CD8-positive, alpha-beta memory T cell (primary cell): ENCODE measurements at regions of chr7 and their contacts with region 1.

Region 1: DNA sequence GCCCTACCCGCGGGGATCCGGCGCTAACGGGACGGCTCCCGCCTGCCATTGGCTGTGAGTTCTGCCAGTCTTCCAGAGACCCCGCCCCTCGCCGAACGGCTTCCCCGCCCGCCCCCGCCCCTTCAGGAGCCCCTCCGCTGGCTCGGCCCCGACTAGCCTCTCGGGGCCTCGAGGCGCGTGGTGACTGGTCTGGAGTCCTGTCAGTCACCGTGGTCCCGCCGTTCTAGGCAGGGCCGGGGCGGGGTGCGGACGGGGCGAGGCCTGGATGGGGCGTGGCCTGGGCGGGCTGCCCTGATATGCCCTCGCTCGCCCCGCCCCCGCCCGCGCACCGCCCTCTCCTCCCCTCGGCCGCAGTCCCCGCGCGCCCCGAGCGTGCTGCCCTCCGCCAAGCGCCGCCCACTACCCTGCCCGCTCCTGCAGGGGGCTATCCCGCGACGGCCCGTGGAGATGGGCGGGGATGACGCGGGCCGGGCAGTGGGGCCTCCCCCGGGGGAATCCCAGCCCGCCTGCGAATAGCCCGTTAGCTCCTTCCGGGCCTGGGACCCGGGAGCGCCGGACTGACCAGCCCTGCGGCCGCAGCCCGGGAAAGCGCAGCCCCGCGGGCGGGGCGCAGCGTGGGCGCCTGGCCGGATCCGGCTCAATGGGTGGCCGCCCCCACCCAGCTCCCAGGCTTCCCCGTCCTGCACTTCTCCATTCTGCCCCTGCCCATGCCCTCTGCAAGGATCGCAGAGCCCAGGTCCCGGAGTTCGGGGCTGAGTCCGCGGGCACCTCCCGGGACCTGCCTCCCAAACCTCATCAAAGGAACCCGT is 450 bp upstream of the HIP1 start:
- DNase-seq: peak; percentile 99 to 100 (median 100)
- H3K4me3 ChIP-seq: peak overlapping the region; percentile 89
- H3K4me3 Mint-ChIP-seq: peak overlapping the region; percentile 89 to 99 (median 97)
- H3K27ac ChIP-seq: peak overlapping the region; percentile 78
- H3K27ac Mint-ChIP-seq: peak overlapping the region; percentile 79 to 100 (median 98)
- H3K4me1 ChIP-seq: peaks cover 9% of the 10 kb centered on the region
- H3K4me1 Mint-ChIP-seq: peaks cover 18 to 35% (median 20%) of the 10 kb centered on the region in 3 donors
- H3K27me3 ChIP-seq: no peaks in the 10 kb centered on the region
- H3K27me3 Mint-ChIP-seq: no peaks in the 10 kb centered on the region

Region 2: DNA sequence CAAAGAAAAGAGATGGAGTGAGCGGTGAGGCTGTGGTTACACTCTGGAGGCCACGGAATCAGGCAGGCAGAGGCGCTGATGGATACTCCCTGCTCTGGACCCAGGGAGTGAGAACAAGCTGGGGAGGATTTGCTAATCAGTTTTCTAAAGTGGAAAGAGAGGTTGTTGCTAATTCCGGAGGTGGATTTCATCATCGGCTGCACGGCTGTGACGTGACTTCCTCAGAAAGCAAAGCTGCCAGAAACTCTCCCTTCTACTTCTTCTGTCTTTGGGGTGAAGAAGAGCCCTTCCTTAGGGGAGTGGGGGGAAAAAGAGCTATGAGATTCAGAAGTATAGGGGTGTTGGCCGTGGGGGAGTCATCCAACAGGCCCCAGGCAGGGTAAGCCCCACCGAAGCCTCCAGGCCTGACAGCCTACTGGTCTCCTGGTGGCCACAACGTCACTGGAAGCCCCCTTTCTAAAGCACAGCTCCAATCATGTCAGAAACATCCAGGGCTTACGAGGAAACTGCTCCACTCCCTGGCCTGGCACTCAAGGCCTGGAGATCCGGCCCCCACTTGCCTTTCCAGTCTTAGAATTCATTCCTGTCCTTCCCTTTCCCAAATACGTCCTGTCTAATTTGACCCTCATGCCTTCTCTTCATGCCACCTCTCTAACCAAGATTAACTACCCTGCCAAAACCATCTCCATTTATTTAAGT is 114.9 kb before region 1 on chr7:
- CTCF ChIA-PET with region 1: no interaction called
- POLR2A ChIA-PET with region 1: no interaction called
- DNase-seq: no peak
- H3K4me3 ChIP-seq: no peak overlapping the region
- H3K4me3 Mint-ChIP-seq: no peak overlapping the region
- H3K27ac ChIP-seq: peak overlapping the region; percentile 48
- H3K27ac Mint-ChIP-seq: peak overlapping the region in 1 of 8 donors; percentile 8
- H3K4me1 ChIP-seq: no peaks in the 10 kb centered on the region
- H3K4me1 Mint-ChIP-seq: peaks cover 4 to 10% (median 9%) of the 10 kb centered on the region in 3 donors
- H3K27me3 ChIP-seq: no peaks in the 10 kb centered on the region
- H3K27me3 Mint-ChIP-seq: no peaks in the 10 kb centered on the region

Region 3: DNA sequence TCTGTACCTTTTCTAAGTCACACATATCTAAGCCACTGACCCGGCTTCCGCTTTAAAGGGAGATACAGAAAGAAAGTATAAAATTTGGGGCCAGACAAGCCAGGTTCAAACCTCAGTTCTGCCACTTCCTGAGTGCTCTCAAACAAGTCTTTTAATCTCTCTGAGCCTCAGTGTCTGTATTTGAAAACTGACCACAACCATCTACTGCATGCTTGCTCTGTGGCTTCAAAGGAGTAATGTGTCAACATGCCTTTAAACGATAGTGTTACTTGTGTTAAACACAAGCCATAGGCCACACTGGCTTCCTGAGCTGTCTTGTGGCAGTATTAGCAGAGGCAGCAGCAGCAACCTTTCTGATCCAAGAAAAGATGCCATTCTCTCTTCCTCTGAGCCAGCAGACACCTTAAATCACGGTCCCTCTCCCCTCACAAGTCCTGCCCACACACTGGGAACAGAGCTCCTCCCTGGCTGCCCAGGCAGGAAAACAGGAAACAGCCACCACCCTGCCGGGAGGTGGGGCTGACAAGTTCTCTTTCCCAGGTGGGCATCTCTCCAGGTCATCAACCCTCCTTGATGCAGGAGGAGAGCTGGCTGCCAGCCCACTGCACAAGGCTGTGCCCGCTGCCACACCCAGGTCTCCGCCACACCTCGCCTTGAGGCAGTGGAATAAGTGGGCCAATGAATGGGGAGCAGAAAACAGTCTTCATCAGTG is 11.2 kb before region 1 on chr7:
- CTCF ChIA-PET with region 1: interaction called, 5 read pairs
- POLR2A ChIA-PET with region 1: interaction called, 19 read pairs
- DNase-seq: peak; percentile 33 to 89 (median 44)
- H3K4me3 ChIP-seq: peak overlapping the region; percentile 32
- H3K4me3 Mint-ChIP-seq: peak overlapping the region; percentile 64 to 85 (median 79)
- H3K27ac ChIP-seq: peak overlapping the region; percentile 54
- H3K27ac Mint-ChIP-seq: peak overlapping the region; percentile 67 to 96 (median 92)
- H3K4me1 ChIP-seq: peaks cover 19% of the 10 kb centered on the region
- H3K4me1 Mint-ChIP-seq: peaks cover 31 to 53% (median 32%) of the 10 kb centered on the region in 3 donors
- H3K27me3 ChIP-seq: no peaks in the 10 kb centered on the region
- H3K27me3 Mint-ChIP-seq: no peaks in the 10 kb centered on the region

Region 4: DNA sequence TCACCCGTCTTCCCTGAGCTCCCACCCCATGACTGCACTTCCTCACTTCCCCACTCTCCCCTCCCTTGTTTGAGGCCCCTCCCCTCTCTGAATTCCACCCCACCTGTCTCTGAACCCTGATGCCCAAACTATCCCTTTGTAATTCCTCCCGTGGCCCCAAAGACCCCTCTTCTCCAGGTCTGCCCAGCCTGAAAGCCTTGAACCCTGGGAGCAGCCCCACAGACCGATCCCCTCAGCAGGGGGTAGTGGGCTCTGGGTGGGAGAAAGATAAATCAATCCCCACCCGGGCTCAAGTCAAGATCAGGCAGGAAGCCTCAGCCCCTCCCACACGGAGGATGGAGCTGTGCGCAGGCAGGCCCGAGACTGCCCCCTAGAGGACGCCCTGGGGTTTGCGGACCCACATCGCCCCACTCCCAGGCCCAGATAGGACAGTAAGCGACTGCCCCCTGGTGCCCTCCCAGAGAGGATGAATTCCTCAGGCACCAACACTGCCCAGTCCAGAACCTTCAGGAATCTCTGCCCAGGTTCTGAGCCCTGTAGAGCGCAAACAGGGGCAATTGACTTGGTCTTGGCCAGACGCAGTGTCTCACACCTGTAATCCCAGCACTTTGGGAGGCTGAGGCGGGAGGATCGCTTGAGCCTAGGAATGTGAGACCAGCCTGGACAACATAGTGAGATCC is 575.0 kb after region 1 on chr7:
- CTCF ChIA-PET with region 1: no interaction called
- POLR2A ChIA-PET with region 1: no interaction called
- DNase-seq: peak; percentile 90 to 96 (median 94)
- H3K4me3 ChIP-seq: no peak overlapping the region
- H3K4me3 Mint-ChIP-seq: peak overlapping the region in 3 of 7 donors; percentile 37 to 64 (median 59)
- H3K27ac ChIP-seq: no peak overlapping the region
- H3K27ac Mint-ChIP-seq: peak overlapping the region in 4 of 8 donors; percentile 10 to 68 (median 64)
- H3K4me1 ChIP-seq: peaks cover 22% of the 10 kb centered on the region
- H3K4me1 Mint-ChIP-seq: peaks cover 18 to 23% (median 22%) of the 10 kb centered on the region in 3 donors
- H3K27me3 ChIP-seq: no peaks in the 10 kb centered on the region
- H3K27me3 Mint-ChIP-seq: no peaks in the 10 kb centered on the region